Heart right ventricle (tissue), 16 donors: ENCODE measurements at regions of chr2 and their contacts with region 1.

Region 1: DNA sequence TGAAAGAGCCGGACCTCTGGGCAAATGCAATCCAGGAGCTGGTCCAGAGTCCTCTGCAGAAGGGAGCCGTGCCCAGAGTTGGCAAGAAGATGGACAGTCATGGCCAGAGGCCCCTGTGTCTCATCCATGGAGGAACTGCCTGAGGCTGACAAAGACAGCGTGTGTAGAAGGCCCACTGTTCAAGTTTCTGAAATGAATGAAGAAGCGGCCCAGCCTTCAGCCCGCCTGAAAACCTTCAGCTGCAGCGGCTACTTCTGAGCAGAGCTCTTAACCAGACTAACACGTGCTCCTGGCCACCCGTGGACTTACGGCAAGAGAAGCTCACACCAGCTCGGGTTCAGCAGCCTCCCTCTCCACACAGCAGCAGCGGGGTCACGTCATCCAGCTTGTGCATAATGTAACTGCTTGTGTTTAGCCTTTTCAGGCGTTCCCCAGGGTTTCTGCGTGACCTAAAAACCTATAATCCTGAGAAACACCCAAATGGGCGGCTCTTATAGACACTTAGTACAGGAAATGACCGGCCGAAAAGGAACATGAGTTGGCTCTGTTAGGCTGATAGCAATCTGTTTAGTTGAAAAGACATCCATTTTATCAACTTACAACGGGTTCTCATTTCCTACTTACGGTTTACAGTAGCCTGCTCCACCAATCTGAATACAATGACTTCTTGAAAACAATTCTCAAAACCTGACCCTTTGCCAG is at the start of gene FAM124B:
- DNase-seq: peak; percentile 61 to 74
- ATAC-seq: peak; percentile 83 to 94 (median 92)
- H3K4me3 ChIP-seq: peak within 1 kb of the TSS; percentile 23 to 61 (median 53)
- H3K27ac ChIP-seq: peak within 1 kb of the TSS; percentile 21 to 80 (median 68)
- H3K4me1 ChIP-seq: peaks cover 0 to 45% (median 9%) of the 10 kb centered on the region in 9 donors
- H3K27me3 ChIP-seq: no peaks in the 10 kb centered on the region
- CTCF ChIP-seq: no peak
- total RNA-seq, gene FAM124B: 0.62 to 3.9 (median 1.7) TPM

Region 2: GRCh38 chr2:224442071-224442967 is 40.5 kb after region 1 on chr2:
- intact Hi-C with region 1: loop called in 1 of 10 experiments (anchors 5 kb)
- DNase-seq: peak in 1 of 2 donors; percentile 33
- ATAC-seq: peak in 5 of 8 donors; percentile 22 to 67 (median 64)
- H3K4me3 ChIP-seq: peak overlapping the region; percentile 41 to 63 (median 58)
- H3K27ac ChIP-seq: peak overlapping the region in 3 of 10 donors; percentile 8 to 64 (median 53)
- H3K4me1 ChIP-seq: peaks cover 0 to 14% (median 9%) of the 10 kb centered on the region in 9 donors
- H3K27me3 ChIP-seq: peaks cover 0 to 22% (median 10%) of the 10 kb centered on the region in 7 donors
- CTCF ChIP-seq: no peak

Region 3: GRCh38 chr2:224555823-224556366 is 154.1 kb after region 1 on chr2:
- intact Hi-C with region 1: no loop called
- DNase-seq: no peak
- ATAC-seq: no peak
- H3K4me3 ChIP-seq: no peak overlapping the region
- H3K27ac ChIP-seq: no peak overlapping the region
- H3K4me1 ChIP-seq: peaks cover 0 to 25% (median 13%) of the 10 kb centered on the region in 9 donors
- H3K27me3 ChIP-seq: no peaks in the 10 kb centered on the region
- CTCF ChIP-seq: no peak